ENCODE measurements at regions of chr12 and their contacts with region 1.

Region 1: GRCh38 chr12:12983420-12984035 is 16.5 kb downstream of the HEBP1 start:
- DNase-seq: no peak
- H3K4me3 ChIP-seq: no peak overlapping the region
- H3K27me3 ChIP-seq: no peaks in the 10 kb centered on the region
- CTCF ChIP-seq: peak; percentile 73

Region 2: GRCh38 chr12:12779529-12779928 is 204.0 kb before region 1 on chr12:
- CTCF ChIA-PET with region 1: no interaction called
- POLR2A ChIA-PET with region 1: no interaction called
- DNase-seq: no peak
- H3K4me3 ChIP-seq: no peak overlapping the region
- H3K27me3 ChIP-seq: no peaks in the 10 kb centered on the region
- CTCF ChIP-seq: no peak

Region 3: GRCh38 chr12:12806784-12807516 is 176.6 kb before region 1 on chr12:
- CTCF ChIA-PET with region 1: interaction called, 3 read pairs
- POLR2A ChIA-PET with region 1: interaction called, 17 read pairs
- DNase-seq: no peak
- H3K4me3 ChIP-seq: no peak overlapping the region
- H3K27me3 ChIP-seq: no peaks in the 10 kb centered on the region
- CTCF ChIP-seq: no peak

Region 4: GRCh38 chr12:13100882-13101769 is 117.6 kb after region 1 on chr12:
- CTCF ChIA-PET with region 1: no interaction called
- POLR2A ChIA-PET with region 1: no interaction called
- DNase-seq: peak; percentile 58
- H3K4me3 ChIP-seq: peak overlapping the region; percentile 35
- H3K27me3 ChIP-seq: no peaks in the 10 kb centered on the region
- CTCF ChIP-seq: no peak

Region 5: GRCh38 chr12:13135371-13136178 is 152.0 kb after region 1 on chr12:
- CTCF ChIA-PET with region 1: no interaction called
- POLR2A ChIA-PET with region 1: no interaction called
- DNase-seq: peak; percentile 74
- H3K4me3 ChIP-seq: no peak overlapping the region
- H3K27me3 ChIP-seq: no peaks in the 10 kb centered on the region
- CTCF ChIP-seq: no peak

Measured in BJ (cell line).